ENCODE measurements at regions of chr1 and their contacts with region 1.

Region 1: GRCh38 chr1:96236156-96236739 is 485.3 kb upstream of the PTBP2 start:
- DNase-seq: no peak
- ATAC-seq: no peak
- H3K4me3 ChIP-seq: no peak overlapping the region
- H3K27ac ChIP-seq: no peak overlapping the region
- H3K4me1 ChIP-seq: no peaks in the 10 kb centered on the region
- H3K27me3 ChIP-seq: no peaks in the 10 kb centered on the region
- CTCF ChIP-seq: peak; percentile 8 to 54 (median 39)
- POLR2A ChIP-seq: no peak

Region 2: DNA sequence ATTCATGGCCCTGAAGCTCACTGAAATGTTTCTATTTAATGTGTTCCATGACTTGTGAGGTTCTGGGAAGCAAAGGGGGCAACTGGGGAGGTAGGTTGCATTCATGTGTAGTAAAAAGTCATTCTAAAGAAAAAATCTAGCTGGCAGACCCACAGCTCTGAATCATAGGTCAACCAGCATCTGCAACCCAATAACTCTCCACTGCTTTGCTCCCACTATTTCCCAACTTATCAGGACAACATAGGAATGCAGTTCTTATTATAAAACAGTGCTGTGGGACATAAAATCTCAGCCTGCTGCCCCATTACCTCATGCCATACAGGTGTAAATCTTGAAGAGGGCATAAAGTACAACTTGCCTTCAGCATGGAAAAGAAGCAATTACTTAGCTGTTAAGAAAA is 90.8 kb before region 1 on chr1:
- in situ Hi-C with region 1: no loop called
- intact Hi-C with region 1: no loop called
- DNase-seq: no peak
- ATAC-seq: no peak
- H3K4me3 ChIP-seq: no peak overlapping the region
- H3K27ac ChIP-seq: no peak overlapping the region
- H3K4me1 ChIP-seq: no peaks in the 10 kb centered on the region
- H3K27me3 ChIP-seq: no peaks in the 10 kb centered on the region
- CTCF ChIP-seq: no peak
- POLR2A ChIP-seq: no peak

Region 3: DNA sequence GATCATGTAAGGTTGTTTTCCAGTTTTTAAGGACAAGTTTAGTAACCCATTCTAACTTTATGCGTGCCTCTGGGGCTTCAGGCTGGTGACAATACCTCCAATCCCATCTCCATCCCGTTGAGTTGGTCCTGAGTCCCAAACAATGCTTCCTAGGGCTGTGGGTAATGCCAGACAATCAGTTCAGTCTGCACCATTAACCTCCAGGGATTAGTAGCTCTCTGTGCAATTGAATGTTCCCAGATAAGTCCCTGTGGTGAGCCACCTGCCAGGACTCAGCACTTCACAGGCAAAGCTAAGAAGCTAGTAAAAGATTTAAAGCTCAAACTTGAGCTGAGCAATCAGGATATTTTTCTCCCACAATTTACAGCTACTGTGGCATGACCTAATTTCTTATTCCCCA is 23.2 kb after region 1 on chr1:
- in situ Hi-C with region 1: no loop called
- intact Hi-C with region 1: no loop called
- DNase-seq: no peak
- ATAC-seq: no peak
- H3K4me3 ChIP-seq: no peak overlapping the region
- H3K27ac ChIP-seq: no peak overlapping the region
- H3K4me1 ChIP-seq: no peaks in the 10 kb centered on the region
- H3K27me3 ChIP-seq: no peaks in the 10 kb centered on the region
- CTCF ChIP-seq: no peak
- POLR2A ChIP-seq: no peak

Region 4: GRCh38 chr1:96756789-96757188 is 520.5 kb after region 1 on chr1:
- in situ Hi-C with region 1: no loop called
- intact Hi-C with region 1: loop called (anchors 10 kb)
- DNase-seq: no peak
- ATAC-seq: no peak
- H3K4me3 ChIP-seq: no peak overlapping the region
- H3K27ac ChIP-seq: no peak overlapping the region
- H3K4me1 ChIP-seq: no peaks in the 10 kb centered on the region
- H3K27me3 ChIP-seq: no peaks in the 10 kb centered on the region
- CTCF ChIP-seq: no peak
- POLR2A ChIP-seq: no peak

Region 5: GRCh38 chr1:96845464-96845863 is 609.2 kb after region 1 on chr1:
- in situ Hi-C with region 1: no loop called
- intact Hi-C with region 1: loop called (anchors 5 kb)
- DNase-seq: no peak
- ATAC-seq: peak in 1 of 2 donors; percentile 55
- H3K4me3 ChIP-seq: no peak overlapping the region
- H3K27ac ChIP-seq: no peak overlapping the region
- H3K4me1 ChIP-seq: no peaks in the 10 kb centered on the region
- H3K27me3 ChIP-seq: no peaks in the 10 kb centered on the region
- CTCF ChIP-seq: peak; percentile 22 to 55 (median 40)
- POLR2A ChIP-seq: no peak

Measured in gastrocnemius medialis (tissue), 4 donors.